HepG2 (cell line): ENCODE measurements at regions of chr1 and their contacts with region 1.

Region 1: GRCh38 chr1:185156854-185157598 is at the starts of genes SWT1 and TRMT1L:
- DNase-seq: peak; percentile 98
- ATAC-seq: peak; percentile 96
- H3K4me3 ChIP-seq: peak within 1 kb of the TSS; percentile 92 to 94 (median 93)
- H3K27ac ChIP-seq: peak within 1 kb of the TSS; percentile 91
- H3K4me1 ChIP-seq: peaks cover 26% of the 10 kb centered on the region
- H3K27me3 ChIP-seq: no peaks in the 10 kb centered on the region; a peak in 1 of 5 replicates
- CTCF ChIP-seq: no peak
- EP300 ChIP-seq: no peak
- POLR2A ChIP-seq: peak; percentile 88 to 95
- RAD21 ChIP-seq: no peak
- total RNA-seq, gene SWT1: 2.5 and 4.8 TPM in 2 replicates
- total RNA-seq, gene TRMT1L: 17.9 and 25.4 TPM in 2 replicates

Region 2: GRCh38 chr1:184754476-184755225 is 402.4 kb before region 1 on chr1 and contains the start of gene EDEM3:
- CTCF ChIA-PET with region 1: no interaction called
- POLR2A ChIA-PET with region 1: no interaction called
- in situ Hi-C with region 1: no loop called
- intact Hi-C with region 1: loop called (anchors 2 kb)
- DNase-seq: peak; percentile 98
- ATAC-seq: peak; percentile 97
- H3K4me3 ChIP-seq: peak within 1 kb of the TSS; percentile 75 to 87 (median 85)
- H3K27ac ChIP-seq: peak within 1 kb of the TSS; percentile 83
- H3K4me1 ChIP-seq: peaks cover 44% of the 10 kb centered on the region
- H3K27me3 ChIP-seq: no peaks in the 10 kb centered on the region
- CTCF ChIP-seq: no peak
- EP300 ChIP-seq: 0 out of 4 replicates have a peak, but pooled peaks of 1 of the 2 experiments have one; percentile 6
- POLR2A ChIP-seq: peak; percentile 63 to 80
- RAD21 ChIP-seq: peak; percentile 44; the same call in 1 of the 2 replicates
- total RNA-seq, gene EDEM3: 11.8 and 18.2 TPM in 2 replicates

Region 3: DNA sequence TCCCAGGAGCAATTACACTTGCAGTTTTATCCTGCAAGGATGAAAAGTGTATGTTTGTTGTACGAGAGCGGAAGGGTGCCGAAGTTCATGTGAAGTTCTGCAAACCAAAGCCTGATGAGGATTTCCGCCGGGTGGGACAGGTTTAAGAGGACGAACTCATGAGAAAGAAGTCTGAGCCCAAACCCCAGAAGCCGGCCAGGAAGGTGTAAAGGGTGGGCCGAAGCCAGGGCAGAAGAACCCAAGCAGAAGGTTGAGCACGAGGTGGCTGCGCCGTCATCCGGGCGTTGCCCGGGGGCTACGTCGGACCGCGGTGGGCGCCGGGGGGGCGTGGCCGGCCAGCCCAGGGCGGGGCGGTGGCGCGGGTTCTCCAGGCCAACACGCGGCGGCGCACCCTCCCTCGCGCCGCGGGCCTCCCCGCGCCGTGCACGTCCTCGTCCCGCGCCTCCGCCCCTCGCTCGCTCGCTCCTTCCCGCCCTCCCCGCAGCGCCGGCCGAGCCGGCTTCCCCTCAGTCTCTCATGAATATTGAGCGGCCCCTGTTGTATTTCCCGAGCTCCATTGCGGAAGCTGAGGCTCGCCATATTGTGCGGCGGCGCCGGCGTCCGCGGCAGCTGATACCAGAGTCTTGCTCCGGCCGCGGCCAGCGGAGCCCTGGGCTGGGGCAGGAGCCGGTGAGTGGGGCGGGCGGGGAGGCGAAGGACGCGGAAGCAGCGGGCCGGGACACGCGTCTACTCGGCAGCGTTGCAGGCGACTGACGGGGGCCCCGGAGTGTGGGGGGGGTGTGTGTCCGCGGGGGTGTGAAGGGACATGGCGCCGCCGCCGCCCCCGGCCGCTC is 111.8 kb before region 1 on chr1 and contains the start of gene RNF2:
- CTCF ChIA-PET with region 1: no interaction called
- POLR2A ChIA-PET with region 1: interaction called, 8 read pairs
- in situ Hi-C with region 1: no loop called
- intact Hi-C with region 1: loop called (anchors 2 kb)
- DNase-seq: peak; percentile 65
- ATAC-seq: peak; percentile 92
- H3K4me3 ChIP-seq: peak within 1 kb of the TSS; percentile 66 to 84 (median 83)
- H3K27ac ChIP-seq: peak within 1 kb of the TSS; percentile 88
- H3K4me1 ChIP-seq: peaks cover 56% of the 10 kb centered on the region
- H3K27me3 ChIP-seq: no peaks in the 10 kb centered on the region
- CTCF ChIP-seq: no peak; the same call in 1 of the 2 replicates
- EP300 ChIP-seq: no peak
- POLR2A ChIP-seq: peak in 1 of 2 experiments; percentile 56; a peak in 2 of 4 replicates
- RAD21 ChIP-seq: peak; percentile 23; the same call in 1 of the 2 replicates
- total RNA-seq, gene RNF2: 21.7 and 32.9 TPM in 2 replicates